ENCODE measurements at regions of chr11 and their contacts with region 1.

Region 1: GRCh38 chr11:130894322-130895025 is 21.8 kb downstream of the SNX19 start:
- DNase-seq: peak; percentile 85
- ATAC-seq: peak; percentile 78
- H3K4me3 ChIP-seq: no peak overlapping the region
- H3K27ac ChIP-seq: no peak overlapping the region
- H3K4me1 ChIP-seq: peaks cover 30% of the 10 kb centered on the region
- H3K27me3 ChIP-seq: no peaks in the 10 kb centered on the region
- CTCF ChIP-seq: peak; percentile 97

Region 2: DNA sequence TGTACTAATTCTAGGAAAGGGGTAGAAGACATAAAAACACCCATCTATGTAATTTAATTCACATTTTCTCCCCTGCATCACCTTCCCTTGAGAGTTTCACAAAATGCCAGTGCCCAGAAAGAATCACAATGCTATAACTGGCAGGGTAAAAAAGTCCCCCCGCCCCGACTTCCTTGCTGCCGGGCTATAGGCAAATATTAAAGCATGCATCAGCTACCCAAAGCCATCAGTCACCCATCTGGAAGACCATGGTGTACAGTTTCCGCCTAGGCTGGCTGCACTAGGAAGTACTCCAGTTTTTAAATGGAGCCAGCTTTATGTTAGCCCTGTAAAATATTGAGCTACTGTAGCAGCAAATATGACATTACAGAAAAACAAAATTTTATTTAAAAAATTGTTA is 667.1 kb before region 1 on chr11:
- CTCF ChIA-PET with region 1: no interaction called
- POLR2A ChIA-PET with region 1: no interaction called
- intact Hi-C with region 1: loop called (anchors 5 kb)
- DNase-seq: no peak
- ATAC-seq: no peak
- H3K4me3 ChIP-seq: no peak overlapping the region
- H3K27ac ChIP-seq: no peak overlapping the region
- H3K4me1 ChIP-seq: no peaks in the 10 kb centered on the region
- H3K27me3 ChIP-seq: no peaks in the 10 kb centered on the region
- CTCF ChIP-seq: no peak

Region 3: DNA sequence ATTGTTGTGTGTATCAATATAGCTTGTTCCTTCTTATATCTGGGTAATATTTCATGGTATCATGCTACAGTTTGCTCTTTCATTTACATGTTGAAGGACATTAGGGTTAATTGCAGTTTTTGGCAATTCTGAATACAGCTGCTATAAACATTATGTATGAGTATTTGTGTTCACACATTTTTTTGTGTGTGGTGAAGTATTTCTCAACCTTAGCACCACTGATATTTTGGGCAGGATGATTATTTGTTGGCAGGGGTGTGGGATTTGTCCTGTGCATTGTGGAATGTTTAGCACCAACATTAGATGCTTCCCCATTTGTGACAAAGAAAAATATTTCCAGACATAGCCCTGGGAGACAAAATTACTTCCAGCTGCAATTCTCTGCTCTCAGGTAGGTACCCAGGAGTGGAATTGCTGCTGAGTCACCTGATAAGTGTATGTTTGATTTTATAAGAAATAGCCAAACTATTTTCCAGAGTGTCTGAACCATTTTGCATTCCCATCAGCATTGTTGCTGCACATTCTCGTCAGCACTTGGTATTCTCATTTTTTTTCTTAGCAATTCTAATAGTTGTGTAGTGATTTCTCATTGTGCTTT is 106.4 kb before region 1 on chr11:
- CTCF ChIA-PET with region 1: no interaction called
- POLR2A ChIA-PET with region 1: no interaction called
- intact Hi-C with region 1: no loop called
- DNase-seq: peak; percentile 47
- ATAC-seq: no peak
- H3K4me3 ChIP-seq: no peak overlapping the region
- H3K27ac ChIP-seq: peak overlapping the region; percentile 64
- H3K4me1 ChIP-seq: peaks cover 32% of the 10 kb centered on the region
- H3K27me3 ChIP-seq: no peaks in the 10 kb centered on the region
- CTCF ChIP-seq: no peak

Region 4: GRCh38 chr11:130827451-130828377 is 66.8 kb before region 1 on chr11:
- CTCF ChIA-PET with region 1: interaction called, 7 read pairs
- POLR2A ChIA-PET with region 1: no interaction called
- intact Hi-C with region 1: loop called (anchors 10 kb)
- DNase-seq: peak; percentile 93
- ATAC-seq: peak; percentile 95
- H3K4me3 ChIP-seq: no peak overlapping the region
- H3K27ac ChIP-seq: peak overlapping the region; percentile 58
- H3K4me1 ChIP-seq: peaks cover 23% of the 10 kb centered on the region
- H3K27me3 ChIP-seq: no peaks in the 10 kb centered on the region
- CTCF ChIP-seq: peak; percentile 89

Region 5: DNA sequence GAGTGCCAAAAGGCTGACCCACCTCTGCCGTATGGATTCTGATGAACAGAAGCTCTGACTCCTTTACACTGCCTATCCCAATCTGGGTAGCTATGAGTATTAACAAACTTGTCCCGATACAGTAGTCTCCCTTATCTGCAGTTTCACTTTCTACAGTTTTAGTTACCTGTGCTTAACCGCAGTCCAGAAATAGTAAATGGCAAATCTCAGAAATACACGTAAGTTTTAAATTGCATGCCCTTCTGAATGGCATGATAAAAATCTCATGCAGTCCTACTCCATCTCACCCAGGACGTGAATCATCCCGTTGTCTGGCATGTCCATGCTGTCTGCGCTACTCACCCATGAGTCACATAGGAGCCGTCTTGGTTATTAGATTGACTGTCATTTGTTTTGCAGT is 47.0 kb before region 1 on chr11:
- CTCF ChIA-PET with region 1: interaction called, 12 read pairs
- POLR2A ChIA-PET with region 1: no interaction called
- intact Hi-C with region 1: no loop called
- DNase-seq: peak; percentile 99
- ATAC-seq: peak; percentile 92
- H3K4me3 ChIP-seq: peak overlapping the region; percentile 57
- H3K27ac ChIP-seq: peak overlapping the region; percentile 97
- H3K4me1 ChIP-seq: peaks cover 53% of the 10 kb centered on the region
- H3K27me3 ChIP-seq: no peaks in the 10 kb centered on the region
- CTCF ChIP-seq: no peak

Region 6: GRCh38 chr11:130861902-130862860 is 32.3 kb before region 1 on chr11:
- CTCF ChIA-PET with region 1: interaction called, 4 read pairs
- POLR2A ChIA-PET with region 1: no interaction called
- intact Hi-C with region 1: loop called (anchors 1 kb)
- DNase-seq: peak; percentile 97
- ATAC-seq: peak; percentile 85
- H3K4me3 ChIP-seq: no peak overlapping the region
- H3K27ac ChIP-seq: peak overlapping the region; percentile 23
- H3K4me1 ChIP-seq: peaks cover 4% of the 10 kb centered on the region
- H3K27me3 ChIP-seq: no peaks in the 10 kb centered on the region
- CTCF ChIP-seq: peak; percentile 100

Region 7: DNA sequence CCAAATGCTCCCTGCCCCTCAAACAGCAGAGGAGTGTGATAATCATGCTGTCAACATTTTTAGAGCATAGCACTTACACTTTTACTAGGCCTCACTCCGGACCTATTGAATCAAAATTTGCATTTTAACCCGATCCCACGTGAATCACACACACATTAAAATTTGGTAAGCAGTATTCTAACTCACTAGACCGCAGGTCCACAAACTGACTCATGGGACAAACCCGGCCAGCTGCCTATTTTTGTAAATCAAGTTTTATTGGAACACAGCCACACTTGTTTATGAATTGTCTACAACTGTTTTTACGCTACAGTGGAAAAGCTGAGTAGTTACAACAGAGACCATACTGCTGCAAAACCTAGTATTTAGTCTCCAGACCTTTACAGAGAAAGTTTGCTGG is 21.5 kb before region 1 on chr11:
- CTCF ChIA-PET with region 1: no interaction called
- POLR2A ChIA-PET with region 1: no interaction called
- intact Hi-C with region 1: loop called (anchors 1 kb)
- DNase-seq: peak; percentile 96
- ATAC-seq: peak; percentile 93
- H3K4me3 ChIP-seq: no peak overlapping the region
- H3K27ac ChIP-seq: peak overlapping the region; percentile 77
- H3K4me1 ChIP-seq: peaks cover 30% of the 10 kb centered on the region
- H3K27me3 ChIP-seq: no peaks in the 10 kb centered on the region
- CTCF ChIP-seq: no peak

Region 8: DNA sequence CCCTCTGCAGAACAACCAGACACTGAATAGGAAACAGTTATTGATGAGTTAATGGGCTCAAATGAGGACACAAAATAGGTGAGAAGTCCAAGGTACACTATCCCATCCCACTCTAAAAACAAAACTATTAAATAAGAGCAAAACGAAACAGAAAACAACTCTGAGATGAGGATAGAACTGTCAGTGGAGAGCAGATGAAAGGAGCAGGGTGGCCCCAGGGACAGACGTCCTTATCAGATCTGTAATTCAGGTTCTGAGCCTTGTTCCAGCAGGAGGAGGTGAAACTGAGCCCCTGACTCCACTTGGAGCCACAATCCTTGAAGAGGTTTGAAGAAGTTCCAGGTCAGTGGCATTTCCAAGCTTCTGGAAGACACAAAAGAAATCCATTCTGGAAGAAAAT is 30.3 kb after region 1 on chr11:
- CTCF ChIA-PET with region 1: no interaction called
- POLR2A ChIA-PET with region 1: no interaction called
- intact Hi-C with region 1: no loop called
- DNase-seq: no peak
- ATAC-seq: no peak
- H3K4me3 ChIP-seq: no peak overlapping the region
- H3K27ac ChIP-seq: no peak overlapping the region
- H3K4me1 ChIP-seq: no peaks in the 10 kb centered on the region
- H3K27me3 ChIP-seq: peaks cover 59% of the 10 kb centered on the region
- CTCF ChIP-seq: no peak

Region 9: DNA sequence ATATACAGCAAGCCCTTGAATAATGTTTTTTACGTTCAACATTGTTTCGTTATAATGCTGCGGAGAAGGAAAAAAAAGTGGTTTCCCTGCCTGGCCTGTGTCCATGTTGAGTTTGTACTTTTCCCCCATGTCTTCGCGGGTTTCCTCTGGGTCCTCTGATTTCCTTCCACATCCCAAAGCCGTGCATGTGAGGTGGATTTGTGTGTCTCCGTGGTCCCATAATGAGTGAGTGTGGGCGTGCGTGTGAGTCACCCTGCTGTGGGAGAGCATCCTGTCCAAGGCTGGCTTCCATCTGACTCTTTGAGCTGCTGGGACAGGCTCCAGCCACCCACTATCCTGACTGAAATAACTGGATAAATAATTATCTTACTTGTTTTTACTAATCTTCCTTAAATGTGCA is 51.4 kb after region 1 on chr11:
- CTCF ChIA-PET with region 1: no interaction called
- POLR2A ChIA-PET with region 1: no interaction called
- intact Hi-C with region 1: no loop called
- DNase-seq: peak; percentile 32
- ATAC-seq: peak; percentile 77
- H3K4me3 ChIP-seq: no peak overlapping the region
- H3K27ac ChIP-seq: no peak overlapping the region
- H3K4me1 ChIP-seq: no peaks in the 10 kb centered on the region
- H3K27me3 ChIP-seq: peaks cover 73% of the 10 kb centered on the region
- CTCF ChIP-seq: no peak

Region 10: DNA sequence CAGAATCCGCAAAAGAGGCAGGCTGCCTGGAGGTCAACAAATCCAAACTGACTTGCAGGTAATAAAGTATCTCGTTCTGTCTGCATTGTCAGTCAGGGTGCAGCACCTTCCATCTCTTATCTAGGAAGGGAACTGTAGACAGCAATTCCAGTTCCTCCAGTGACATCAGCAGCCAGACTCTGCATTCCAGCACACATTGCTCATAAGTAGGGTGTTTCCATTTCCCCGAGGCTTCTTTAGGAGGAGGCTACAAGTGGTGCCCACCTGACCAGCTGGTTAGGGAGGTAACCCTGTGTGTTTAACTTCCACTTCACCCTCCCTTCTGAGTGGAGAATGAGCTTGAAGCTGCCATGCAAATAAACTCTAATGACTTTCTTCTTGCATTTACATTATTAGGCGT is 529.2 kb after region 1 on chr11:
- CTCF ChIA-PET with region 1: no interaction called
- POLR2A ChIA-PET with region 1: no interaction called
- intact Hi-C with region 1: no loop called
- DNase-seq: peak; percentile 62
- ATAC-seq: 0 out of 2 replicates have a peak, but pooled peaks have one; percentile 20
- H3K4me3 ChIP-seq: no peak overlapping the region
- H3K27ac ChIP-seq: no peak overlapping the region
- H3K4me1 ChIP-seq: no peaks in the 10 kb centered on the region
- H3K27me3 ChIP-seq: peaks cover 35% of the 10 kb centered on the region
- CTCF ChIP-seq: no peak

Measured in PC-3 (cell line).